Caco-2 (cell line): ENCODE measurements at regions of chr2 and their contacts with region 1.

Region 1: GRCh38 chr2:146147448-146148012 is 1627.6 kb upstream of the ZEB2 start:
- DNase-seq: peak in 1 of 2 experiments; percentile 2
- H3K4me3 ChIP-seq: no peak overlapping the region
- H3K4me3 Mint-ChIP-seq: no peak overlapping the region
- H3K27ac Mint-ChIP-seq: no peak overlapping the region
- H3K4me1 ChIP-seq: no peaks in the 10 kb centered on the region
- H3K4me1 Mint-ChIP-seq: no peaks in the 10 kb centered on the region
- H3K27me3 ChIP-seq: no peaks in the 10 kb centered on the region
- H3K27me3 Mint-ChIP-seq: no peaks in the 10 kb centered on the region
- CTCF ChIP-seq: peak in 1 of 2 experiments; percentile 3

Region 2: GRCh38 chr2:146214394-146214929 is 66.9 kb after region 1 on chr2:
- CTCF ChIA-PET with region 1: no interaction called
- POLR2A ChIA-PET with region 1: no interaction called
- intact Hi-C with region 1: loop called (anchors 5 kb)
- DNase-seq: no peak
- H3K4me3 ChIP-seq: no peak overlapping the region
- H3K4me3 Mint-ChIP-seq: no peak overlapping the region
- H3K27ac Mint-ChIP-seq: no peak overlapping the region
- H3K4me1 ChIP-seq: 0 out of 2 replicates have a peak, but pooled peaks cover 3% of the 10 kb centered on the region
- H3K4me1 Mint-ChIP-seq: no peaks in the 10 kb centered on the region
- H3K27me3 ChIP-seq: no peaks in the 10 kb centered on the region
- H3K27me3 Mint-ChIP-seq: no peaks in the 10 kb centered on the region
- CTCF ChIP-seq: no peak

Region 3: DNA sequence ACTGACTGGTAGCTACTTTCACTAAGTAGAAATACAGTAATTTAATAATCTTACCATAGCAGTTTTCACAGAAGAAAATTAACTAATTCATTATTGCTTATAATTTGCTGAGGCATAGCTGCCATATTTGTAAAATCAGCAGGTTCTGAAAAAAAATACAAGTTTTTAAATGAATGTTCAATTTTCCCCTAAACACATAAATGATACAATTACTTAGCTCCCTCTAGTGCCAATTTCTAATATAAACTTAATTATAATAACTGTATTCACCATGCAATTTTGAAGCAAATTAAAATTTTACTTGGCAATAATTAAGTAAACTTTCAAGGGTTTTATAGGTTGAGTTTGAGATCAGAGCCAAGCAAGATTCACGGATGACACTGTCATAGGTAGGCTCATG is 375.7 kb after region 1 on chr2:
- CTCF ChIA-PET with region 1: no interaction called
- POLR2A ChIA-PET with region 1: no interaction called
- intact Hi-C with region 1: loop called (anchors 10 kb)
- DNase-seq: no peak
- H3K4me3 ChIP-seq: no peak overlapping the region
- H3K4me3 Mint-ChIP-seq: no peak overlapping the region
- H3K27ac Mint-ChIP-seq: no peak overlapping the region
- H3K4me1 ChIP-seq: no peaks in the 10 kb centered on the region
- H3K4me1 Mint-ChIP-seq: no peaks in the 10 kb centered on the region
- H3K27me3 ChIP-seq: no peaks in the 10 kb centered on the region
- H3K27me3 Mint-ChIP-seq: no peaks in the 10 kb centered on the region
- CTCF ChIP-seq: peak in 1 of 2 experiments; percentile 56